ENCODE measurements at regions of chr11 and their contacts with region 1.

Region 1: DNA sequence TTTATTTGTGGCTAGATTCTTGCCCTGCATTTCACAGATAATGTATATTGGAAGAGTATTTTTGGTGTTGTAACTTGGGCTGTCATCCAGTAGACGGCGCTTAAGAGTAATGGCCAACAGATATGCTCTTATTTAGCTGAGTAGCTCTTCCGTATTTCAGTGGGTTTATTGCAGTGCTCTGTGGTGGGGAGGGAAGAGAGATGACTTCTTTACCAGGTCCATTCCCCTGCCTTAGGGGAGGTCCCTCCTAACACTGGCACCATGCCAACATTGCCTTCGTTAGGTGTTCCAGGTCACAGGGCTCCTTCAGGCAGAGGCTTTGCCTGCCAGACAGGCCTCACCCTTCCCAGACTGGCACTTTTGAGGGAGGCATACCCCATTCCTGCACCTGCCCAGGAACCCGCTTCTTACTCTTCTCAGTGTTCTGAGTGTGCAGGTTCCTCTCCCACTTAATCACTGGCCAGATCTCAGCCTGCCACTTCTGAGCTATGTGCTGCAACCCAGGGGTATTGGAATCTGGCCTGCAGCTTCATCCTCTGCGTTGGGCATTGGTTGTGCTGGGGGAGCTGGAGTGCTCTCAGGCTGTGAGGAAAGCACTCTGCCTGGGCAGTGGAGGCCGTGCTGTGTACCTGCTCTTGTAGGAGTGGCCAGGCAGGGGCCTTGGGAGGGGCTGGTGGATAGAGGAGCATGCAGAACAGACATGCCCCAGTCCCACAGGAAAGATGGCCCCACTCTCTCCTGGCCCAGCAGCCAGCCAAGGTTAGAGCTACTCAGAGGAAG is 29.4 kb upstream of the SLN start:
- DNase-seq: no peak
- H3K4me3 Mint-ChIP-seq: no peak overlapping the region
- H3K27ac Mint-ChIP-seq: no peak overlapping the region
- H3K4me1 Mint-ChIP-seq: peaks cover 1% of the 10 kb centered on the region
- H3K27me3 Mint-ChIP-seq: peaks cover 16% of the 10 kb centered on the region

Region 2: DNA sequence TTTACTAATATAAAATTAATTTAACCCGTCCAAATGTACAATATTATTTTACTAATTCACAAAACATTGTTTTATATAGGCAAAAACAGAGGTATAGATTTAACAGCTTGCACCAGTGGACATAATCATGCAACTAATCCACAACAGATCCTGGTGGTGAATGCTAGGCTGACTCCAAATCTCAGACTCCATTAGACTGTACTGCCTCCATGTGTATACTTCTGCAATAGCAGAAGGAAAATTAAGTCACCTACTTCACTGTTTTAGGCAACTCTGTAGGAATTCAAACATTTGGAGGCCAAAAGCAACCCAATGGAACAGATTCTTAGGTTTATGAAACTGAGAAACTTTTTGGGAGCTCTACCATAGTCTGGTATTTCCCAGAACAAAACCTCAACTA is 157.0 kb after region 1 on chr11:
- intact Hi-C with region 1: loop called (anchors 2 kb)
- DNase-seq: no peak
- H3K4me3 Mint-ChIP-seq: no peak overlapping the region
- H3K27ac Mint-ChIP-seq: no peak overlapping the region
- H3K4me1 Mint-ChIP-seq: no peaks in the 10 kb centered on the region
- H3K27me3 Mint-ChIP-seq: peaks cover 5% of the 10 kb centered on the region